Dendritic cell treated with granulocyte-macrophage colony-stimulating factor and Interleukin-4, amounts not matched to agents 40 ng/mL and 50 ng/mL, for 4 days (primary cell): ENCODE measurements at regions of chr15 and their contacts with region 1.

Region 1: DNA sequence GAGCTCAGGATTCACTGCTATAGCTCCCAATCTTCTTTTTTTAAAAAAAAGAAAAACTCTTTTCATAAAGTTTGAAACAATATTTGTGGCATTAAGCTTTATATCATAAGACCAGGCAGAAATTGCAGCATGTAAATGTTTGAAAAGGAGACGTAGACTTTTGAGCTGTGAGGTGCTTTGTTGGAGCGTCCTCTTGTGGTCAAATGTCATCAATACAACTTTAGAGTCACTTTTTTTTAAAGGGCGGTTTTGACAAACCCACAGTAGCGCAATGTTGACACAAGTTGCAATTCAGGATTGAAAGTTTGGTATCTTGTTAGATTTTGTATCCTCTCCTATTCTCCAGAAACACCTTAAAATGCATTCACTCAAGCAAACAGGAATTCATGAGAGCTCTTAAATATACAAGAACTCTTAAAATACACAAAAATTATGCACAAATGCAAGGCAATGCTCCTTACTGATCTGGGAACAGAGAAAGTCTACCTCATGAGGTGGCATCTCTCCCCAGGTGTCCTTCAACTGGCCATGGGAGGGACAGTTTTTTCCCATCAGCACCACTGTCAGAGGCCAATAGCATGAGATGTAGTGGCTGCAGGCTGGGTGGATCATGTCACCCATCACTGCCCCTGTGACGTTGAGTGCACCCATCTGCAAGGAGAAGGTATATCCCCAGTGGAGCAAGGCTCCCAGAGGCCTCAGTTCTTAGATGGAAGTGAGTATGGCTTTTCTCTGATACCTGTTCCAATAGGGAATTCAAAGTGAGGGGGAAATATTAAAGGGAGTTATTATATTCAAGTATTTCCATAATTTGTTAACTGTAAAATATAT is 70.7 kb downstream of the ANXA2 start:
- H3K4me3 Mint-ChIP-seq: no peak overlapping the region
- H3K27ac Mint-ChIP-seq: no peak overlapping the region
- H3K4me1 Mint-ChIP-seq: no peaks in the 10 kb centered on the region
- H3K27me3 Mint-ChIP-seq: peaks cover 33% of the 10 kb centered on the region

Region 2: GRCh38 chr15:59688841-59689625 is 638.0 kb before region 1 on chr15 and contains the start of gene BNIP2:
- intact Hi-C with region 1: loop called (anchors 2 kb)
- H3K4me3 Mint-ChIP-seq: peak within 1 kb of the TSS; percentile 89
- H3K27ac Mint-ChIP-seq: peak within 1 kb of the TSS; percentile 97
- H3K4me1 Mint-ChIP-seq: peaks cover 25% of the 10 kb centered on the region
- H3K27me3 Mint-ChIP-seq: no peaks in the 10 kb centered on the region

Region 3: GRCh38 chr15:59725172-59725486 is 601.9 kb before region 1 on chr15:
- intact Hi-C with region 1: loop called (anchors 2 kb)
- H3K4me3 Mint-ChIP-seq: no peak overlapping the region
- H3K27ac Mint-ChIP-seq: no peak overlapping the region
- H3K4me1 Mint-ChIP-seq: no peaks in the 10 kb centered on the region
- H3K27me3 Mint-ChIP-seq: no peaks in the 10 kb centered on the region

Region 4: GRCh38 chr15:59917504-59918157 is 409.4 kb before region 1 on chr15:
- intact Hi-C with region 1: loop called (anchors 2 kb)
- H3K4me3 Mint-ChIP-seq: no peak overlapping the region
- H3K27ac Mint-ChIP-seq: no peak overlapping the region
- H3K4me1 Mint-ChIP-seq: no peaks in the 10 kb centered on the region
- H3K27me3 Mint-ChIP-seq: peaks cover 9% of the 10 kb centered on the region

Region 5: DNA sequence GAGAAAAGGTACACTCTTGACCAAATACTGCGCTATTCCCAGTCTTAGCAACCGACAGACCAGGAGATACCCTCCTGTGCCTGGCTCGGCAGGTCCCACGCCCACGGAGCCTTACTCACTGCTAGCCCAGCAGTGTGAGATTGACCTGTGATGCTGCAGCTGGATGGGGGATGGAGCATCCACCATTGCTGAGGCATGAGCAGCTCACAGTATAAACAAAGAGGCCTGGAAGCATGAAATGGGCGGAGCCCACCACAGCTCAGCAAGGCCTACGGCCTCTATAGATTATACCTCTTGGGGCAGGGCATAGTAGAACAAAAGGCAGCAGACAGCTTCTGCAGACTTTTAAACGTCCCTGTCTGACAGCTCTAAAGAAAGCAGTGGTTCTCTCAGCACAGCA is 89.6 kb before region 1 on chr15:
- intact Hi-C with region 1: no loop called
- H3K4me3 Mint-ChIP-seq: no peak overlapping the region
- H3K27ac Mint-ChIP-seq: no peak overlapping the region
- H3K4me1 Mint-ChIP-seq: no peaks in the 10 kb centered on the region
- H3K27me3 Mint-ChIP-seq: peaks cover 12% of the 10 kb centered on the region

Region 6: DNA sequence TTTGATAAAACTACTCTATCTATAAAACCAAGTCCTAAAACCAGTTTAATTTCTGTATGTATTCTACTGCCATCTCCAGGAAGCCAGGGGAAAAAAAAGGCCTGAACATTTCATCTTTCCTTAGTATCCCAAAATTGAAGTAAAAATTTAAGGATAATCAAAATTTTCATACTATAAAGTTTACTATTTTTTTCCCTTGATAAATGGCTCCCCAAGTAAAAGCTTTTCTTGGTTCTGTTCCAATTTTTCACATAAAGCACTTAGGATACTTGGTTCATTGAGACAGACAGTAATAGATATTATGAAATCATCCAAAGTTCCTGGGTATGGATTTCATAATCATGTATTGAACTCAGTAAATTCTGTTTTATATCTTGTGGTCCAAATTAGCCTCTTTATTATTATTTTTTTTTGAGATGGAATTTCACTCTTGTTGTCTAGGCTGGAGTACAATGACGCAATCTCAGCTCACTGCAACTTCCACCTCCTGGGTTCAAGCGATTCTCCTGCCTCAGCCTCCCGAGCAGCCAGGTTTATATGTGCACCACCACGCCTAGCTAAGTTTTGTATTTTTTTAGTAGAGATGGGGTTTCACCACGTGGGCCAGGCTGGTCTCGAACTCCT is 117.4 kb after region 1 on chr15:
- intact Hi-C with region 1: loop called (anchors 5 kb)
- H3K4me3 Mint-ChIP-seq: no peak overlapping the region
- H3K27ac Mint-ChIP-seq: no peak overlapping the region
- H3K4me1 Mint-ChIP-seq: peaks cover 10% of the 10 kb centered on the region
- H3K27me3 Mint-ChIP-seq: no peaks in the 10 kb centered on the region

Region 7: GRCh38 chr15:60520825-60521368 is 193.9 kb after region 1 on chr15:
- intact Hi-C with region 1: loop called (anchors 1 kb)
- H3K4me3 Mint-ChIP-seq: no peak overlapping the region
- H3K27ac Mint-ChIP-seq: no peak overlapping the region
- H3K4me1 Mint-ChIP-seq: peaks cover 6% of the 10 kb centered on the region
- H3K27me3 Mint-ChIP-seq: no peaks in the 10 kb centered on the region